ENCODE measurements at regions of chrX and their contacts with region 1.

Region 1: DNA sequence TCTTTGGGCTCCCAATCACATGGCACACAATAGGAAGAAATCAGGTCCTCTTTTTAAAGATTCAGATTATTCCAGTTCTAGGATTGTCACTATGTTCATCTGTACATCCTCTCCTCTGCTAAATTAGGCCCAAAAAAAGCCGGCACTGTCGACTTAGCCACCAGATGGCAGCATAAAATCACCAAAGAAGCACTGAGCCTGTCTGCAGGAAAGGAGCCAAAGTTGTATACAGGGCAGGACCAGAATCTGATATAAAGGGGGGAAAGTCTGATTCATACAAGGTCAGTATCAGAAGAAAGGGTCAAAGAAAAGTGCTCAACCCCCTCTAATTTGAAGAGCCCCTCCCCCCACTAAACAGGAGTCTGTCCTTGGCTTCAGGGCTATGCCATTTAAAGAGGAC is 292.5 kb downstream of the CHIC1 start:
- DNase-seq: peak; percentile 17 to 65 (median 18)
- ATAC-seq: peak; percentile 45; the same call in 2 of the 3 replicates
- H3K4me3 ChIP-seq: no peak overlapping the region
- H3K27ac ChIP-seq: no peak overlapping the region
- H3K4me1 ChIP-seq: no peaks in the 10 kb centered on the region
- H3K27me3 ChIP-seq: no peaks in the 10 kb centered on the region
- CTCF ChIP-seq: peak; percentile 68 to 79 (median 72)
- EP300 ChIP-seq: no peak
- POLR2A ChIP-seq: no peak
- RAD21 ChIP-seq: peak; percentile 78 to 87

Region 2: GRCh38 chrX:73841337-73841736 is 14.2 kb before region 1 on chrX:
- CTCF ChIA-PET with region 1: no interaction called
- POLR2A ChIA-PET with region 1: no interaction called
- in situ Hi-C with region 1: no loop called
- intact Hi-C with region 1: no loop called
- DNase-seq: no peak
- ATAC-seq: no peak
- H3K4me3 ChIP-seq: no peak overlapping the region
- H3K27ac ChIP-seq: no peak overlapping the region
- H3K4me1 ChIP-seq: no peaks in the 10 kb centered on the region; a peak in 1 of 5 replicates
- H3K27me3 ChIP-seq: no peaks in the 10 kb centered on the region
- CTCF ChIP-seq: no peak
- EP300 ChIP-seq: no peak
- POLR2A ChIP-seq: no peak
- RAD21 ChIP-seq: no peak

Region 3: GRCh38 chrX:73916931-73917667 is 61.6 kb after region 1 on chrX:
- CTCF ChIA-PET with region 1: no interaction called
- POLR2A ChIA-PET with region 1: no interaction called
- in situ Hi-C with region 1: no loop called
- intact Hi-C with region 1: no loop called
- DNase-seq: no peak
- ATAC-seq: no peak
- H3K4me3 ChIP-seq: no peak overlapping the region
- H3K27ac ChIP-seq: no peak overlapping the region
- H3K4me1 ChIP-seq: no peaks in the 10 kb centered on the region
- H3K27me3 ChIP-seq: no peaks in the 10 kb centered on the region
- CTCF ChIP-seq: no peak
- EP300 ChIP-seq: no peak
- POLR2A ChIP-seq: no peak
- RAD21 ChIP-seq: no peak

Region 4: DNA sequence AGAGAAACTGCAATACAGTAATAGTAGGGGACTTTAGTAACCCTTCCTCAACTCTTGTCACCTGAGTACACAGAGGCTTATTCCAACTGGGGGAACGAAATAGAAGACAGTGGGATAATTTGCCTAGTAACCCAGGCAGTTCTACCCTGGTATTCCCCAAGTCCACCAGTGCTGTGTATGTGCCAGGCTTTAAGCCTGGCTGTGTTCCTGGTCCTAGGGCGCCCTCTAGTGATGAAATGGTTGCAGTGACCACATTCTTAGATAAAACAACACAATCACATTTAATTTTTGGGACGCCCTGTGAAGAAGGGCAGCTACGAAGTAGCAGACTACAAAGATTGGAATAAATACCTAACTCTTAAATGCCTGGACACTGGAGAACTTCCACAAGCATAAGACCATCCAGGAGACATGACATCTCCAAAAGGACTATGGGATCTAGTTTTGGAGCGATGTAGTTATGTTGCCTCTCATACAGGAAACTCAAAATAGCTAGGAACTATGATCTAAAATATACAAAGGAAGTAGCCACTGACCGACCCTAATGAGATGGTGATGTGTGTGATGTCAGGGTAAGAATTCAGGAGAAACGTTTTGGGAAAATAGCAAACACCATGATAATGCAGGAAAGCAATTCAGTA is 160.0 kb after region 1 on chrX:
- CTCF ChIA-PET with region 1: interaction called, 14 read pairs
- POLR2A ChIA-PET with region 1: no interaction called
- in situ Hi-C with region 1: loop called (anchors 10 kb)
- intact Hi-C with region 1: loop called (anchors 1 kb)
- DNase-seq: peak; percentile 53 to 80 (median 60)
- ATAC-seq: peak; percentile 91
- H3K4me3 ChIP-seq: no peak overlapping the region
- H3K27ac ChIP-seq: no peak overlapping the region
- H3K4me1 ChIP-seq: no peaks in the 10 kb centered on the region
- H3K27me3 ChIP-seq: no peaks in the 10 kb centered on the region
- CTCF ChIP-seq: peak; percentile 70 to 75 (median 73)
- EP300 ChIP-seq: no peak
- POLR2A ChIP-seq: no peak
- RAD21 ChIP-seq: peak; percentile 30 to 83; a peak in 3 of 4 replicates

Region 5: DNA sequence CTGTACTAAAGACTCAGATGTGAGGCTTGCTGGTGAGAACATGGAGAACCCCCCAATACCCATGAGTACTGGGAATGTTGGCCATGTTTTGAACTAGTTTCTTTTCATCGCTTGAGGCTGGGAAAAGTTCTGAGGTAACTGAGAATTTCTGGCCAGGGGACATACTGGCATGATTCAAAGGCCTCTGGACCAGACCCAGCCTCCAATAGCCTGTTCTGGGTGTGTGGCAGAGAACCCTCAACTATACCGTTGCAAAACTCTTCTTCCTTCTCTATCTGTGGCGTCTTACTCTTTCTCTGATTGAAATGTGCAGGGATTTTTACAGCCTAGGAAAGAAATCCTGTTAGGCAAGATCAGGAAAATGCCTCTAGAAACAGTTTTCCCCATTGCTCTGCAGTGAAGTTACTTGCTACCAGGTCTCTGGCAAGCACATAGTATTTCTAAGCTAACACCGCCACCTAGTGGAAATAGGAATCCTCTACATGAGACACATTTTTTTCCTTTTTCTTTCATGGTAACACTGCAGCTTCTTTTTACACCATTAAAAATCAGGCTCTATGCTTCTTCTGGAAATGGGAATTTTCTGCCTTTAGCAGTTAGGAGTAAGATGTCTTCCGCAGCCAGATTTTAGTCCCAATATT is 277.7 kb after region 1 on chrX:
- CTCF ChIA-PET with region 1: interaction called, 6 read pairs
- POLR2A ChIA-PET with region 1: no interaction called
- in situ Hi-C with region 1: loop called (anchors 5 kb)
- intact Hi-C with region 1: loop called (anchors 1 kb)
- DNase-seq: peak; percentile 39 to 56 (median 46)
- ATAC-seq: peak; percentile 87
- H3K4me3 ChIP-seq: no peak overlapping the region
- H3K27ac ChIP-seq: no peak overlapping the region
- H3K4me1 ChIP-seq: no peaks in the 10 kb centered on the region
- H3K27me3 ChIP-seq: no peaks in the 10 kb centered on the region
- CTCF ChIP-seq: peak; percentile 58 to 77 (median 59)
- EP300 ChIP-seq: no peak
- POLR2A ChIP-seq: no peak
- RAD21 ChIP-seq: peak; percentile 70 to 87

Region 6: DNA sequence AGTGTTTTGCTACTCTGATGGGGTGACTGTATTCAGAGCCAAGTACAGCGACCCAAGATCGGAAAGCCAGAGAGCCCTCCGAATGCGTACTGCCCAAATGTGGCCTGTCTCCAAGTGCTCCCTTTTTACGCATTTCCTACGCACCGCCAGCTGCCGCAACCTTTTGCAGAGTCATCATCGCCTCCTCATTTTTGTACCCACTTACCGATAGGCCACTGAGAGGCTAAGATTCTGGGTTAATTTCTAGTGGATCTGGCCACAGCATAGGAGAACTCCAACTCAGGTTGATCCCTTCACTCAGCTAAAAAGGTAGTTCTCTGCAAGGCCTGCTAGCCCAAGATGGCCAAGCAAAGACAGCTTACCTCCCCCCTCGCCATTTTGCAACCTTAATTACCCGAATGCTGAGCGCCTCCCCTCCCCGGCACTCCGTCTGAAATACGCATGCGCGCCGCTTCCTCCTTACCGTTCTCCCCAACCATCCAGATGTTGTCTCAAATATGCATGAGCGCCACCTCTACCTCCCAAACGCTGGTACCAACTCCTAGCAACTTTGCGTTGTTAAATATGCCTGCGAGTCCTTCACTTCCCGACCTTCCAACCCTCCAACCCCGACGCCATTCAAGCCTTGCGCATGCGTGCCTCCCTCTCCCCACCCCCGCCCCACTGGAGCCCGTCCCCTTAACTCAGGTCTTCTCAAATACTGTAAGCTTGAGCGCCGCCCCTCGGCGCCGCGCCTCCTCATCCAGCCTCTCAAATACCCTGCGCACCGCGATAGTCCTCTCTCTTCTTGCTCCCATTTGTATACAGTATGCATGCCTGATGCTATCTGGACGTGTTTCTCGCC is 436.6 kb after region 1 on chrX:
- CTCF ChIA-PET with region 1: no interaction called
- POLR2A ChIA-PET with region 1: interaction called, 3 read pairs
- in situ Hi-C with region 1: no loop called
- intact Hi-C with region 1: loop called (anchors 1 kb)
- DNase-seq: peak; percentile 89 to 95 (median 91)
- ATAC-seq: peak; percentile 90
- H3K4me3 ChIP-seq: peak overlapping the region; percentile 63
- H3K27ac ChIP-seq: peak overlapping the region; percentile 99
- H3K4me1 ChIP-seq: peaks cover 0 to 7% of the 10 kb centered on the region in 2 experiments; a peak in 2 of 5 replicates
- H3K27me3 ChIP-seq: no peaks in the 10 kb centered on the region
- CTCF ChIP-seq: peak; percentile 44 to 57 (median 48); a peak in 5 of 6 replicates
- EP300 ChIP-seq: no peak
- POLR2A ChIP-seq: peak; percentile 88
- RAD21 ChIP-seq: 0 out of 4 replicates have a peak, but pooled peaks of 1 of the 2 experiments have one; percentile 15

Region 7: DNA sequence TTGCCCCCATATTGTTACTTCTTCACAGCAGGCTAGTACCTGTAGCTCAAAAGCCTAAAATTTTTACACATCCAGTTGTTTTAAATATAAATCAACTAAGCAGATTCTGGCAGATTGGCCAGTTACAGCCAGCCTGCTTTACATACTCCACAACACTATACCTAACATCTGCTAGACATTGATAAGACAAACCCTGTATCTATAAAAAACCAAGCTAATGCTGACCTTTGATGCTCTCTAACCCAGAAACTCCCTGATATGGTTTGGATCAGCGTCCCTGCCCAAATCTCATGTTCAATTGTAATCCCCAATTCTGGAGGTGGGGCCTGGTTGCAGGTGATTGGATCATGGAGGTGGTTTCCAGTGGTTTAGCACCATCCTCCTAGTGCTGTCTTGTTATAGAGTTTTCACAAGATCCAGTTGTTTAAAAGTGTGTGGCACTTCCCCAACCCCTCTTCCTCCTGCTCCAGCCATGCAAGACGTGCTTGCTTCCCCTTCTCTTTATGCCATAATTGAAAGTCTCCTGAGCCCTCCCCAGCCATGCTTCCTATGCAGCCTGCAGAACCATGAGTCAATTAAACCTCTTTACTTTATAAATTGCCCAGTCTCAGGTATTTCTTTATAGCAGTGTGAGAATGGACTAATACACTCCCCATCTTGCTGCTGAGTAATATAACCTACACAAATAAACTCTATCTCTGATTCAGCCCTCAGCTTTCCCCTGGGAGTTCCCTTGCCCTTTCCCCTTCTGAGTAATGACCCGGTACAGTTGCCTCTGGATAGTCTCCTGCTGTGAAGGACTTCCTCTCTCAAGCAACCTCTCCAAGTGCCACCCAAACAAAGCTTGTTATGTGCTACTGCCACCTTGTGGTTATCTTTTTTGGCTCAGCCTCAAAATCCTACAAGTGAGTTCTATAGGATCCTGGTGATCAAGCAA is 488.1 kb after region 1 on chrX:
- CTCF ChIA-PET with region 1: interaction called, 5 read pairs
- POLR2A ChIA-PET with region 1: no interaction called
- in situ Hi-C with region 1: loop called (anchors 10 kb)
- intact Hi-C with region 1: loop called (anchors 1 kb)
- DNase-seq: peak; percentile 24 to 78 (median 40)
- ATAC-seq: peak; percentile 95
- H3K4me3 ChIP-seq: no peak overlapping the region
- H3K27ac ChIP-seq: no peak overlapping the region
- H3K4me1 ChIP-seq: peaks cover 0 to 4% of the 10 kb centered on the region in 2 experiments; a peak in 1 of 5 replicates
- H3K27me3 ChIP-seq: no peaks in the 10 kb centered on the region
- CTCF ChIP-seq: peak; percentile 52 to 64 (median 63); a peak in 5 of 6 replicates
- EP300 ChIP-seq: no peak
- POLR2A ChIP-seq: no peak
- RAD21 ChIP-seq: peak; percentile 48 to 75; a peak in 3 of 4 replicates

Region 8: DNA sequence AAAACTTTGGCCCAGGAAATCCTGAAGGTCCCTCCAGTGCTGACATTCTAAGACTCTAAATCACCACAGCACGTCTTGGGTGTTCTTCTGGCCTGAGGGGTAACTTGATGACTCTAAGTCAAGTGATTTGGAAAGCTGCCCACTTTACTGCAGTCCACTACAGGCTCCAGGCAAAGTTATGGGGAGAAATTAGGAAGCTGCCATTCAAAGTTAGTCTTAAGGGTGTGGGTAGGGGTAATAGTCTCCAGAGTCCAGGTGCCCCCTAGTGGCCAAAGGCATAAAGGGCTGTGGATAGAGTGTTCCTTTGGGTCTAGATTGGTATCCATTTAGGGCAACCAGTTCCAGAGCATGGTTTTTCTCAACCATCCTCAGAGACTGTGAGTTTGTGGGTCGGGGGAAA is 527.1 kb after region 1 on chrX:
- CTCF ChIA-PET with region 1: interaction called, 4 read pairs
- POLR2A ChIA-PET with region 1: no interaction called
- in situ Hi-C with region 1: no loop called
- intact Hi-C with region 1: loop called (anchors 2 kb)
- DNase-seq: peak; percentile 58 to 64 (median 61)
- ATAC-seq: peak; percentile 97
- H3K4me3 ChIP-seq: no peak overlapping the region
- H3K27ac ChIP-seq: no peak overlapping the region
- H3K4me1 ChIP-seq: no peaks in the 10 kb centered on the region
- H3K27me3 ChIP-seq: no peaks in the 10 kb centered on the region
- CTCF ChIP-seq: peak; percentile 66 to 71 (median 71)
- EP300 ChIP-seq: no peak
- POLR2A ChIP-seq: no peak
- RAD21 ChIP-seq: peak; percentile 57 to 58

Region 9: DNA sequence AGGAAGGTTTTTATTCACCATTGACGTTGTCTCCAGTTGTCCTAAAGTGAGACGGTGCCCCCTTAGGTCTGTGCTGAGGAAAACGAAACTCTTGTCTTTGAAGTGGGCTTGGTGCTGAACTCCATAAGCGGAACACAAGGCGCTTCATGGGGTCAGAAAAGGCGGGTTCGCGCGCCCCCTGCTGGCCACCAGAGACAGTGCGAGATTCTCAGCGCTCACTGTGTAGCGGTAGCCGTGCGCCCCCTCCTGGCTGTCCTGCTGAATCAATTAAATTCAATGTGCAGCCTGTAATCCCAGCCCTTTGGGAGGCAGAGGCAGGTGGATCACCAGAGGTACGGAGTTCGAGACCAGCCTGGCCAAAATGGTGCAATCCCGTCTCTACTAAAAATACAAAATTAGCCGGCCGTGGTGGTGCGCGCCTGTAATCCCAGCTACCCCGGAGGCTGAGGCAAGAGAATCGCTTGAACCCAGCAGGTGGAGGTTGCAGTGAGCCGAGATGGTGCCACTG is 694.8 kb after region 1 on chrX:
- CTCF ChIA-PET with region 1: interaction called, 3 read pairs
- POLR2A ChIA-PET with region 1: no interaction called
- in situ Hi-C with region 1: no loop called
- intact Hi-C with region 1: loop called (anchors 2 kb)
- DNase-seq: peak; percentile 55 to 79 (median 66)
- ATAC-seq: peak; percentile 96
- H3K4me3 ChIP-seq: no peak overlapping the region
- H3K27ac ChIP-seq: no peak overlapping the region
- H3K4me1 ChIP-seq: no peaks in the 10 kb centered on the region
- H3K27me3 ChIP-seq: no peaks in the 10 kb centered on the region
- CTCF ChIP-seq: peak; percentile 95 to 99 (median 99)
- EP300 ChIP-seq: no peak
- POLR2A ChIP-seq: no peak
- RAD21 ChIP-seq: peak; percentile 67 to 83

Measured in K562 (cell line).